HEK293 (cell line): ENCODE measurements at regions of chr7 and their contacts with region 1.

Region 1: GRCh38 chr7:101308245-101309085 is 13.1 kb downstream of the IFT22 start:
- H3K4me3 ChIP-seq: peak overlapping the region; percentile 58
- H3K27ac ChIP-seq: peak overlapping the region; percentile 75
- H3K4me1 ChIP-seq: no peaks in the 10 kb centered on the region
- CTCF ChIP-seq: no peak

Region 2: DNA sequence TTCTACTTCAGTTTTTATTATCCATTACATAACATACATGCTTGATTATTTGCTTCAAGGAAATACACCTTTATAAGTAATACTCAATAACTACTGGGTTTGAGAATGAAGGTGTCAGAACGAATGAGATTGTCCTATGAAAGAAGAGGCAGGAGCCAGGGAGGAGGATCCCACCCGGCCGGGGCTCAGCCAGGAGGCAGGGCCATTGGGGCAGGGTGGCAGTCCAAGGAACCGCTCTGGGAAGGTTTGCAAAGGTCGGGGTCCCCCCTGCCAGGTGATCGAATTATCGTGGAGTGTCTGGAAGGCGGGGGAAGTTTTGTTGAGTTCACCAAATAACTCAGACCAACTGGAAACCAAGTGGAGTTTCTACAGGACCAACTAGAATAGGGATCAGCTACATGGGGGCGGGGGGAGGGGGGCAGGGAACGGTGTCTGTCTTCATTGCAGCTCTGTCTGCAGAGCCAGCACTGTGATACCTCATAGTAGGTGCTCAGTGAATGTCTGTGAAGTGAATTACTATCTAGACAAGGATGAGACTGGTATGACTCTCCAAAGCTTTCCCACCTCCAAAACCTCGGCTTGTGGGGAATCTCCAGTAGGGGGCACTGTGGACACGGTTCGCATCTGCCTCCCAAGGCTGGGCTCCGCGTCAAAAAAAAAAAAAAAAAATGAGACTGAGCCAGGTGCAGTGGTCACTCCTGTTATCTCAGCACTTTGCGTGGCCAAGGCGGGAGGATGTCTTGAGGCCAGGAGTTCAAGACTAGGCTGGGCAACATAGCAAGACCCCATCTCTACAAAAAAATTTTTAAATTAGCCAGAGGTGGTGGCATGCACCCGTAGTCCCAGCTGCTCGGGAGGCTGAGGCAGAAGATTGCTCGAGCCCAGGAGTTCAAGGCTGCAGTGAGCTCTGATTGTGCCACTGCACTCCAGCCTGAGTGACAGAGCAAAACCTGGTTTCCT is 213.8 kb before region 1 on chr7:
- CTCF ChIA-PET with region 1: no interaction called
- POLR2A ChIA-PET with region 1: no interaction called
- H3K4me3 ChIP-seq: no peak overlapping the region
- H3K27ac ChIP-seq: no peak overlapping the region
- H3K4me1 ChIP-seq: no peaks in the 10 kb centered on the region
- CTCF ChIP-seq: peak; percentile 65; the same call in 1 of the 2 replicates

Region 3: DNA sequence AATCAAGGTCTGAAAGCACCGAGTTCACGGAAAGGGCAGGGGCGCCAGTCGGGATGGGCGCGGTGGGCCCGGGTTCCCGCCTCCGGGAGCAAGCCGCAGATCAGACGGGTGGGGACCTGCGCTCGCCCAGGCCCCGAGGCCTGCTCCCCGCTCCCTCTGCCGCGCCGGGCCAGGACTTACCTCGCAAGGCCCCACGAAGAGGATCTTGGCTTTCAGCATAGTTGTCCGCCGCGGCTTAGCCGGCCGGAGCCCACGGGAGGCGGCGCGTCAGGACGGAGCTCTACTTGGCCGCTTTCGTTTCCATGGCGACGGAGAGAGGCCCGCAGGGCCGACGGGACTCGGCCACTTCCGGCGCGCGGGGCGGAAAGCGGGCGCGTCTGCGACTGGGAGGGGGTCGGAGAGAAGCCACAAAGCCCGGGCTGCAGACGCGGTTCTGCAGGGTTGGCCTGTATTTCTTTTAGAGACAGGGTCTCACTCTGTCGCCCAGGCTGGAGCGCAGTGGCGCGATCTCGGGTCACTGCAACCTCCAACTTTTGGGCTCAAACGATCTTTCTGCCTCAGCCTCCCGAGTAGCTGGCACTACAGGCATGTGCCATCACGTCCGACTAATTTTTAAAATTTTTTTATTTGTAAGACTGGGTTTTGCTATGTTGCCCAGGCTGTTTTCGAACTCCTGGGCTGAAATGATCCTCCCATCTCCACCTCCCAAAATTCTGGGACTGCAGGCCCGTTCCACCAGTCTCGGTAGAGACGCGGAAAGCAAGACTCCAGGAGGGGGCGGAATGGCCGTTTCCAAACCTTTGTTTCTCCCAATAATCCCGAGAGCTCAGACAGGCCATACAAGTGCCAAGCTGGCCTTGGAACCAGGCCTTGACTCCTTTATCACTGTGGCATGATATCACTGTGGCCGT is 13.3 kb after region 1 on chr7 and contains the start of gene IFT22:
- CTCF ChIA-PET with region 1: interaction called, 3 read pairs
- POLR2A ChIA-PET with region 1: interaction called, 30 read pairs
- H3K4me3 ChIP-seq: peak within 1 kb of the TSS; percentile 87
- H3K27ac ChIP-seq: peak within 1 kb of the TSS; percentile 78
- H3K4me1 ChIP-seq: no peaks in the 10 kb centered on the region
- CTCF ChIP-seq: peak; percentile 49

Region 4: GRCh38 chr7:101373812-101374614 is 65.5 kb after region 1 on chr7:
- CTCF ChIA-PET with region 1: no interaction called
- POLR2A ChIA-PET with region 1: no interaction called
- H3K4me3 ChIP-seq: no peak overlapping the region
- H3K27ac ChIP-seq: no peak overlapping the region
- H3K4me1 ChIP-seq: no peaks in the 10 kb centered on the region; the same call in 1 of the 2 replicates
- CTCF ChIP-seq: no peak